ENCODE measurements at regions of chr7 and their contacts with region 1.

Region 1: GRCh38 chr7:3754488-3755341 is 453.7 kb downstream of the SDK1 start:
- DNase-seq: peak; percentile 38 to 91 (median 76)

Region 2: DNA sequence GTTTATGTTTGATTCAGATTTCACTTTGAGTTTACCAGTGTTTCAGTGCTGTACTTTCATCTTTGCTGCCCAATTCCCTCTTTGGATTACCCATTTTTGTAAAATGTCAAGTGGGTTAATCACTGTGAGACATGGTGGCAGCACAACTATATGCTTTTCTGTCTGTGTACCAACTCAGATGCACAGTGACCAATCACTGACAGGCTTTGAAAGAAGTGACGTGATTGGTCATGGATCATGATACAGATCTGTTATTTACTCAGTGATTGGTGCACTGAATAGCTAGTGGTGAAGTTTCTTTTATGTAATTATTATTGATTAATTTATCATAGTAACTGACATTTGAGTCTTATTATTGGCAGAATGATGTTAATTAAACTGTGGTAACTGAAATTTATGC is 326.8 kb before region 1 on chr7:
- intact Hi-C with region 1: no loop called
- DNase-seq: peak in 7 of 42 donors; percentile 1 to 47 (median 13)

Region 3: GRCh38 chr7:3911685-3912084 is 157.0 kb after region 1 on chr7:
- intact Hi-C with region 1: loop called (anchors 5 kb)
- DNase-seq: no peak